ENCODE measurements at regions of chr4 and their contacts with region 1.

Region 1: GRCh38 chr4:176340871-176341685 is 21.3 kb downstream of the SPCS3 start:
- DNase-seq: no peak
- ATAC-seq: peak; percentile 37 to 56
- H3K4me3 ChIP-seq: peak overlapping the region; percentile 7
- H3K27ac ChIP-seq: no peak overlapping the region
- H3K4me1 ChIP-seq: peaks cover 10% of the 10 kb centered on the region
- H3K27me3 ChIP-seq: no peaks in the 10 kb centered on the region
- CTCF ChIP-seq: peak; percentile 62

Region 2: GRCh38 chr4:175916626-175917351 is 424.3 kb before region 1 on chr4:
- intact Hi-C with region 1: no loop called
- DNase-seq: no peak
- ATAC-seq: no peak
- H3K4me3 ChIP-seq: no peak overlapping the region
- H3K27ac ChIP-seq: no peak overlapping the region
- H3K4me1 ChIP-seq: no peaks in the 10 kb centered on the region
- H3K27me3 ChIP-seq: no peaks in the 10 kb centered on the region
- CTCF ChIP-seq: no peak

Region 3: DNA sequence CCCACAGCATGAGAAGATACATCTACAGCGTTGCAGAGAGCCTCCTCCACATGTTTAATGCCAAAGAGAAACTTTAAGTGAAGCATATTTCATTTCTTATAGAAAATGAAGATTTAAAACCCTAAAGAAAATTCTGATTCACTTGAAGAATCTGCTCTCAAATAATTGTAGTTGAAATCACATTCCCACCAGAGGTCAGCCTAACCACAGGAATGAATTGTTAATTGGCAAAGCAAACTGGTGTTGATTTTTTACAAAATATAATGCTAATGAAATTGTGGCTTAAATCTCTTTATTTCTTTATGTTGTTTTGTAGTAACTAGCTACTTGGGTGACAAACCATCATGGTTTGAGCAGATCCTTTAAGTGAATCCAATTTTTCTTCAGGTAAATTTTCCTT is 306.6 kb before region 1 on chr4:
- intact Hi-C with region 1: loop called (anchors 10 kb)
- DNase-seq: no peak
- ATAC-seq: no peak
- H3K4me3 ChIP-seq: no peak overlapping the region
- H3K27ac ChIP-seq: no peak overlapping the region
- H3K4me1 ChIP-seq: no peaks in the 10 kb centered on the region
- H3K27me3 ChIP-seq: no peaks in the 10 kb centered on the region
- CTCF ChIP-seq: peak; percentile 42

Region 4: GRCh38 chr4:176226736-176227135 is 114.3 kb before region 1 on chr4:
- intact Hi-C with region 1: no loop called
- DNase-seq: no peak
- ATAC-seq: no peak
- H3K4me3 ChIP-seq: no peak overlapping the region
- H3K27ac ChIP-seq: no peak overlapping the region
- H3K4me1 ChIP-seq: no peaks in the 10 kb centered on the region
- H3K27me3 ChIP-seq: no peaks in the 10 kb centered on the region
- CTCF ChIP-seq: no peak

Region 5: DNA sequence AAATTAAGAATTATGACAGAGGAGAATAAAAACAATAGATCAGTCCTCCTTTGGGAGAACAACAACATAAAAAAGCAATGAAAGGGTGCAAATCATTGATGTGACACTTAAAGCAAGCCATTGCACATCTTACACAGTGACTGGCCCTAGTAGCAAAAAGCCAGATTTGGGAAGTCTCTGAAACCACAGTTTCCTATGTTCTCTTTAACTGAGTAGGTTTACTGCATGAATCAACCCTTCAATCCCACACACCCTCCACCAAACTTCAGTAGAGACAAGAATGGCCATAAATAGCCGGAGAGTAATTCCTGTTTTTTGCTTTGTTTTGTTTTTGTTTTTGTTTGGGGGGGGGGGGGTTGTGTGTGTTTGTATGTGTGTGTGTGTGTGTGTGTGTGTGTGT is 270.9 kb after region 1 on chr4:
- intact Hi-C with region 1: no loop called
- DNase-seq: no peak
- ATAC-seq: no peak
- H3K4me3 ChIP-seq: no peak overlapping the region
- H3K27ac ChIP-seq: no peak overlapping the region
- H3K4me1 ChIP-seq: no peaks in the 10 kb centered on the region
- H3K27me3 ChIP-seq: no peaks in the 10 kb centered on the region
- CTCF ChIP-seq: no peak

Measured in lower lobe of right lung (tissue), 2 donors.